ENCODE measurements at regions of chr9 and their contacts with region 1.

Region 1: GRCh38 chr9:34796924-34797323 is 87.0 kb upstream of the CCL21 start:
- DNase-seq: no peak

Region 2: GRCh38 chr9:34826999-34827538 is 30.1 kb after region 1 on chr9:
- intact Hi-C with region 1: loop called in 1 of 2 experiments (anchors 1 kb)
- DNase-seq: no peak

Region 3: GRCh38 chr9:35152936-35153335 is 356.0 kb after region 1 on chr9:
- intact Hi-C with region 1: no loop called
- DNase-seq: no peak

Measured in posterior vena cava (tissue), 2 donors.